Left ventricle myocardium inferior (tissue), 1 donor: ENCODE measurements at regions of chr13 and their contacts with region 1.

Region 1: DNA sequence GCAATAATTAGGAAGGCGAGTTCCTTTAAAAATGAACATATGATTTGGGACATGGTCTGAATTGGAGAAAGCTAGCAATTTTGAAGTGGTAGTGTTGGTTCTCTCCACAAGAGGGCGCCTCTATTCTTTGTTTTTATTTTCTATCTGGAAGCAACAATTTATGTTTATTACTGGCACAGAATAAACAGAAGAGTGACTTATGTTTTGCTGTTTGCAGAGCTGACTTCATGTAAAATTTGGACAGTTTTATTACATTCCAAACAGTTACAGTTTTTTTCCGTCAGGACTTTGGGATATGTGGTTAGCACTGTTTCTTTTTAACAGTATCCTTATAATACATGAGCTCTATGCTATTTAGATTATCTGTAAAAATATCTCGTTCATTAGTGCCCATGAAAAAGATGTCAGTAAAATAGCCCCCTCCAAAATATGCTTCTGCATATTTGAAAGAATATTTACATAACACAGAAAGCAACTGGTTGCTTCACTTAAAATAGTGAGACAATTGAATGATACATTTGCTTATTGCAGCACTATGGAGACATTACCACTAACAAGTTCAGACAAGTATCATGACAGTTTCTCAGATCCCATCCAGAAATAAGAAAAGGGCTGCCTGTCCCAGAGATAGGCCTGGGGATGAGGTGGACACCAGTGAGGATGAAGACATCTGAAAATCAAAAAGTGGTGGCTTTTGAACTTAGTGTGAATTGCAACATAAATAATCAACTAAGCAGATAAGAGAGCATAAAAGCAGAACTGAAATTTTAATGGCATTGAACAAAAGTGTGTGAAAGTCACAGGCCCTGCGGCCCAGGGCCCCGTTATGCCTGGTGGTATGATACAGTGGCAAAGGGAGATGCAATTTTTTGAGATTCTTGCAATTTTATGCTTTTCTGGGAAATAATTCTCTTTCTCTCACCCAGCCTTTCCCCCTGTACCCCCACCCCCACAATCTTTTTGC is 32.3 kb upstream of the FGF9 start:
- DNase-seq: no peak
- H3K4me3 ChIP-seq: no peak overlapping the region
- H3K27ac ChIP-seq: no peak overlapping the region
- H3K4me1 ChIP-seq: no peaks in the 10 kb centered on the region
- H3K27me3 ChIP-seq: peaks cover 8% of the 10 kb centered on the region
- CTCF ChIP-seq: peak; percentile 84

Region 2: GRCh38 chr13:21709697-21710096 is 71.1 kb after region 1 on chr13:
- intact Hi-C with region 1: no loop called
- DNase-seq: no peak
- H3K4me3 ChIP-seq: no peak overlapping the region
- H3K27ac ChIP-seq: no peak overlapping the region
- H3K4me1 ChIP-seq: no peaks in the 10 kb centered on the region
- H3K27me3 ChIP-seq: no peaks in the 10 kb centered on the region
- CTCF ChIP-seq: no peak

Region 3: DNA sequence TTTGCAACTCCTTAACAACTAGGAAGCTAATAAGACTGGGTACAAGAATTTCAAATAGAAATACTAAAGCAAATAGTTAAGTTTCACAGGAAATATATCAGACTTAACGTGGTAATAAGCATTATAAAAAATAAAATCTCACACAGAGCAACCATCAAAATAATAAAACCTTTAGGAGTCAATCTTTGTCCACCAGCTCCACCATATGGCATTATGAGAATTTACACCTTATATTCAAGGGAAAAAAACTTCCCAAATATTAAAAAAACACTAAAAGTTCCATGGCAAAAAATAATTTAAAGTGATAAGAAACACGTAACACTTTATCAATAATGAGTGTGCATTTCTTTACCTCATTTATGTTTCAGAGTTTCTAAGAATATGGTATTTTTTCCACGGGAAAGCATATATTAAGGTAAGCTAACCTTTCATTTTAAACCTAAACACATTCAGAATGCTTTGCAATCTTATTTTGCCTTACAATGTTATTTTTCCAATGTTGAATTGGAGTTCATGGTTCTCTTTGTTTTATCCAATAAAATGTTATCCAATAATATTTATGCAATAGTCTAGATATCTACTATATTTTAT is 1119.0 kb after region 1 on chr13:
- intact Hi-C with region 1: loop called (anchors 5 kb)
- DNase-seq: no peak
- H3K4me3 ChIP-seq: no peak overlapping the region
- H3K27ac ChIP-seq: no peak overlapping the region
- H3K4me1 ChIP-seq: no peaks in the 10 kb centered on the region
- H3K27me3 ChIP-seq: no peaks in the 10 kb centered on the region
- CTCF ChIP-seq: peak; percentile 59